ENCODE measurements at regions of chr9 and their contacts with region 1.

Region 1: DNA sequence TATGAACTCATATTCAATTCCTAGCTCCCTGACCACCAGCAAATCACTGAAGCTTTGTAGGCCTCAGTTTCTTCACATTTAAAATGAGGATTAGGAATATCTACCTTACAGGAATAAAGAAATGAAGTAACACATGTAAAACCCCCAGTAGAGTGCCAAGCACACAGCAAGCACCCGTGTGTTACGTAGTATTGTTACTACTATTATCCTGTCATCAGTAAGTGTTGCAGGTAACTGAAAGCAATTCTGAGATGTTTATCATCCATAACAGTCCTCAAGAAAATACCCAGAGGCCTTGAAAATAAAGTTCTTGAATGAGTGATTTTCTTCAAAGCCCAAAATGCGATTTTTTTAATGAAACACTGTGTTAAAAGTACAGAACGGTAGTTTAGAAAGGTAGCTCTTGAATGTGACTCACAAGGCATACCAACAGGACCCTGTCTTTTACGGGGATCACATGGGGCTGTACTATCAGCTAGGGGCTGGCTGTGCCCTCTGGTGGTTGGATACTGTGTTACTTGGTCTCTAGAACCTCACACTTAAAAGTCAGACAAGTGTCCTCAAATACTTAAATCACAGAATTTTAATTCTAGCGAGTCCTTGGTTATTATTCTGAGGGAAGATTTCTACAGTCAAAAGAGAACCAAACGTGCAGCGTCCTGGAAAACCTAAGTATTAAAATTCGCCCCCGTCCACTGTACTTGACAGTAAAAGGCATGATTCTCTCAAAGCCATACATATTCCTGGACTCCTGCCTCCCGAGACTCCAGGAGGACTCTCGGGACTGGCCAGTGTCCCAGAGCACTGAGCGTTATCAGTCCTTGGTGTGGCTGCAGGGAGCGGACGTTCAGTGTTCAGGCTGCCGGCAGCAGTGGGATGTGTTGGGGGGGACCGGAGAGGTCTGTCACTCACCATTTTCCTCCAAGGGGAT is 725 bp downstream of the NDUFB6 start:
- DNase-seq: peak; percentile 84
- H3K4me3 Mint-ChIP-seq: peak overlapping the region; percentile 93
- H3K27ac Mint-ChIP-seq: peak overlapping the region; percentile 90
- H3K4me1 Mint-ChIP-seq: peaks cover 13% of the 10 kb centered on the region
- H3K27me3 Mint-ChIP-seq: no peaks in the 10 kb centered on the region
- CTCF ChIP-seq: peak; percentile 64

Region 2: GRCh38 chr9:32431940-32432555 is 140.2 kb before region 1 on chr9:
- CTCF ChIA-PET with region 1: interaction called, 4 read pairs
- POLR2A ChIA-PET with region 1: no interaction called
- intact Hi-C with region 1: loop called (anchors 5 kb)
- DNase-seq: peak; percentile 51
- H3K4me3 Mint-ChIP-seq: no peak overlapping the region
- H3K27ac Mint-ChIP-seq: peak overlapping the region; percentile 46
- H3K4me1 Mint-ChIP-seq: no peaks in the 10 kb centered on the region
- H3K27me3 Mint-ChIP-seq: no peaks in the 10 kb centered on the region
- CTCF ChIP-seq: peak; percentile 47

Region 3: DNA sequence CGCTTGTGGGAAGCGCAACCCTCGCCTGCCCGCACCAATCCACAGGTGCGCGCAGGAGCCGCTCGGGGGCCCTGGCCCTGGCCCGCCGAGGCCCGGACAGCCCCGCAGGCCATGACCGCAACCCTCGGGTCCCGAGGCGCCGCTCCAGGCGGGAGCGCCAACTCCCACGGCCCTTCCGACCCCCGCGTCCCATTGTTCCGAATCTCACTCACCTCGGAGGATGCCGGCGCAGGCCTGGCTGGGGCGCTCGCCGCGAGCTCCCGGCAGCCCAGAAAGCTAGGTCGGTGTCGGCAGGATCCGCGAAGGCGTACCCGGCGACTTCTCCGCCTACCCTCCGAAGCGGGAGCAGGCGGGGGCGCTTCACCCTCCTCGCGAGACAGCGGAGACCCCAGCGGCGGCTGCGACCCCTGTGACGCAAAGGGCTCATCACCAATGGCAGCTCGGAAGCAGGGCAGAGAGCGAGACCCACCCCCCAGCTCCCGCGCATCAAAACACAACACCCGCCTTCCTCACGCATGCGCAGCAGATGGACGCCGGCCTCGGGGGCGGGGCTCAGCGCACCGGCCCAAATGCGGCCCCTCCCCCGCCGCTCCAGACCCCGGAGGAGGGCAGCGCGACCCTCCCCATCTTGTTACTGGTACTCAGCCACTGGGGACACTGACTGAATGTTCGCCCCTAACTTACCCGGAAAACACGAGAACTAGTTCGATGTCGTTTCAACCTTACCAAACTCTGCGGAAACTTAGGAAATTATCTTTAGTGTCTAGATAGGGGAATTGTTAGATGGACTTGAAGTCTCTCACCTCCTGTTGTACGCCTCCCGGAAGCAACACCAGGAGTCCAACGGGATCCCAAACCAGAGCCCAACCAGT is 21.4 kb before region 1 on chr9:
- CTCF ChIA-PET with region 1: interaction called, 8 read pairs
- POLR2A ChIA-PET with region 1: interaction called, 61 read pairs
- intact Hi-C with region 1: loop called (anchors 1 kb)
- DNase-seq: peak; percentile 86
- H3K4me3 Mint-ChIP-seq: peak overlapping the region; percentile 98
- H3K27ac Mint-ChIP-seq: peak overlapping the region; percentile 94
- H3K4me1 Mint-ChIP-seq: peaks cover 13% of the 10 kb centered on the region
- H3K27me3 Mint-ChIP-seq: no peaks in the 10 kb centered on the region
- CTCF ChIP-seq: no peak

Measured in MCF 10A (cell line).